ENCODE measurements at regions of chr6 and their contacts with region 1.

Region 1: GRCh38 chr6:25138237-25139125 is 140.7 kb upstream of the CARMIL1 start:
- DNase-seq: peak; percentile 38
- H3K4me3 ChIP-seq: peak overlapping the region; percentile 67
- H3K27ac ChIP-seq: peak overlapping the region; percentile 93
- H3K4me1 ChIP-seq: peaks cover 24% of the 10 kb centered on the region
- H3K27me3 ChIP-seq: no peaks in the 10 kb centered on the region
- CTCF ChIP-seq: peak; percentile 47

Region 2: GRCh38 chr6:24991810-24992467 is 146.5 kb before region 1 on chr6:
- intact Hi-C with region 1: no loop called
- DNase-seq: no peak
- H3K4me3 ChIP-seq: no peak overlapping the region
- H3K27ac ChIP-seq: no peak overlapping the region
- H3K4me1 ChIP-seq: no peaks in the 10 kb centered on the region
- H3K27me3 ChIP-seq: no peaks in the 10 kb centered on the region
- CTCF ChIP-seq: peak; percentile 82

Region 3: DNA sequence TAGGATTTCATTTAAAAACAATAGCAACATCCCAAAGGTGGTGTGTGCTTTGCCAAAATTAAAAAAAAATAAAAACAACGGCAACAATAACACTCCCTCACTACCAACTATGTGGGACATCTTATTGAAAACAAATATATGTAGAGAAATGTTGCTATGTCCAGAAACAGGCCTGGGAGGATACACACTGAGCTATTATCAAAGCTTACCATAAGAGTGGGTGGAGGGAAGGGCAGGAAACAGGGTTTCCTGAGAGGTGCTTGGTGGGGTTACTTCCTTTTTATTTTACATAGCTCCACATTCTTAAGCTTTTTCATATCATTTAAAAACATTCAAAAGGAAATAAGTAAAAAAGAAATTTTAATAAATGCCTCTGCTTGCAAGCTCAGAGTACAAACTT is 52.7 kb before region 1 on chr6:
- intact Hi-C with region 1: loop called (anchors 5 kb)
- DNase-seq: no peak
- H3K4me3 ChIP-seq: no peak overlapping the region
- H3K27ac ChIP-seq: peak overlapping the region; percentile 79
- H3K4me1 ChIP-seq: peaks cover 69% of the 10 kb centered on the region
- H3K27me3 ChIP-seq: no peaks in the 10 kb centered on the region
- CTCF ChIP-seq: no peak

Region 4: GRCh38 chr6:25193460-25194171 is 55.1 kb after region 1 on chr6:
- intact Hi-C with region 1: loop called (anchors 10 kb)
- DNase-seq: no peak
- H3K4me3 ChIP-seq: peak overlapping the region; percentile 11
- H3K27ac ChIP-seq: peak overlapping the region; percentile 84
- H3K4me1 ChIP-seq: peaks cover 16% of the 10 kb centered on the region
- H3K27me3 ChIP-seq: no peaks in the 10 kb centered on the region
- CTCF ChIP-seq: no peak